ENCODE measurements at regions of chr4 and their contacts with region 1.

Region 1: GRCh38 chr4:30073011-30073710 is 647.0 kb upstream of the PCDH7 start:
- DNase-seq: no peak
- H3K4me3 ChIP-seq: no peak overlapping the region
- H3K4me3 Mint-ChIP-seq: no peak overlapping the region
- H3K27ac ChIP-seq: no peak overlapping the region
- H3K27ac Mint-ChIP-seq: no peak overlapping the region
- H3K4me1 ChIP-seq: no peaks in the 10 kb centered on the region
- H3K4me1 Mint-ChIP-seq: no peaks in the 10 kb centered on the region
- H3K27me3 ChIP-seq: no peaks in the 10 kb centered on the region
- H3K27me3 Mint-ChIP-seq: no peaks in the 10 kb centered on the region

Region 2: GRCh38 chr4:30094887-30095286 is 21.7 kb after region 1 on chr4:
- CTCF ChIA-PET with region 1: no interaction called
- POLR2A ChIA-PET with region 1: no interaction called
- intact Hi-C with region 1: loop called (anchors 2 kb)
- DNase-seq: no peak
- H3K4me3 ChIP-seq: no peak overlapping the region
- H3K4me3 Mint-ChIP-seq: no peak overlapping the region
- H3K27ac ChIP-seq: no peak overlapping the region
- H3K27ac Mint-ChIP-seq: no peak overlapping the region
- H3K4me1 ChIP-seq: no peaks in the 10 kb centered on the region
- H3K4me1 Mint-ChIP-seq: no peaks in the 10 kb centered on the region
- H3K27me3 ChIP-seq: no peaks in the 10 kb centered on the region
- H3K27me3 Mint-ChIP-seq: no peaks in the 10 kb centered on the region

Region 3: DNA sequence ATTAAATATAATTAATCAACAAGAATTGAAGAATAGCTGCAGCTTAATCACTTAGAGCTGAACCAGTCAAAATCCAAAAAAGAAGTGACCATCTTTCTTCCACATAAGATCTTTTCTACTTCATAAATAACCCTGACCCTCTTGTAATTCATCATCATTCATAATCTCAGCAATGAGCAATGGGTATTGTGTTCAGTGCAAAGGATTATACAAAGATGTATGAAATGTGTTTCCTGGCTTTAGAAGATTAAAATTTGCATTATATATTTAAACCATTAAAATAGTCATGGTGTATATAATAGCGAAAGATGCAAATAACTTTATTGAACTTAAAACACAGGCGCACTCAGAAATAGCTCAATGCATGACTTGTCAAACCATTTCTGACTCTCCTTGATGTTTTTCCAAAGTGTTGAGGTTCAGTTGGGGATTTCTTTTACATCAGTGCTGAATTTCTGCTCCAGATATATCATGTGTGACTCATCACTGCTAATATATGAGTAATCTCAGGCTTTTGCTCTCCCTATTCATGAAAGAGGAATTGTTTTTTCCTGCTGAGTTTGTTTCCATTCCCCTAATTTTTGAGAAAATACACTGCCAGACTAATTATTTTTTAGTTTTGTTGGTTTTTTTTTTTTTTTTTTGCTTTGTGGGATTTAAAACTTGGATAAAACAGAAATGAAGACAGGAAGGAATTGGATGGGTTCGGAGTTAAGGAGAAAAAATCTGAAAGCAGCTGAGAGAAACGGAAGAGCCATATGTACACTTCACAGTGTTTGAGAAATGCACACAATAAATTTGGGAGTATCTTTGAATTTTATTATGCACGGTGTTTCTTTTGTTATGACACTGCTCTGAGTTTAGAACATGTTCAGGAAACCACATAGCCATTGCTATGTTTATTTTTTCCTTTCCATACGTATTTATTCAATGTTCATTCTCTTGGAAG is 356.9 kb after region 1 on chr4:
- CTCF ChIA-PET with region 1: no interaction called
- POLR2A ChIA-PET with region 1: no interaction called
- intact Hi-C with region 1: no loop called
- DNase-seq: no peak
- H3K4me3 ChIP-seq: no peak overlapping the region
- H3K4me3 Mint-ChIP-seq: no peak overlapping the region
- H3K27ac ChIP-seq: no peak overlapping the region
- H3K27ac Mint-ChIP-seq: no peak overlapping the region
- H3K4me1 ChIP-seq: no peaks in the 10 kb centered on the region
- H3K4me1 Mint-ChIP-seq: peaks cover 0 to 1% (median 0%) of the 10 kb centered on the region in 4 donors
- H3K27me3 ChIP-seq: no peaks in the 10 kb centered on the region
- H3K27me3 Mint-ChIP-seq: no peaks in the 10 kb centered on the region